Right ventricle myocardium inferior (tissue), 1 donor: ENCODE measurements at regions of chr1 and their contacts with region 1.

Region 1: DNA sequence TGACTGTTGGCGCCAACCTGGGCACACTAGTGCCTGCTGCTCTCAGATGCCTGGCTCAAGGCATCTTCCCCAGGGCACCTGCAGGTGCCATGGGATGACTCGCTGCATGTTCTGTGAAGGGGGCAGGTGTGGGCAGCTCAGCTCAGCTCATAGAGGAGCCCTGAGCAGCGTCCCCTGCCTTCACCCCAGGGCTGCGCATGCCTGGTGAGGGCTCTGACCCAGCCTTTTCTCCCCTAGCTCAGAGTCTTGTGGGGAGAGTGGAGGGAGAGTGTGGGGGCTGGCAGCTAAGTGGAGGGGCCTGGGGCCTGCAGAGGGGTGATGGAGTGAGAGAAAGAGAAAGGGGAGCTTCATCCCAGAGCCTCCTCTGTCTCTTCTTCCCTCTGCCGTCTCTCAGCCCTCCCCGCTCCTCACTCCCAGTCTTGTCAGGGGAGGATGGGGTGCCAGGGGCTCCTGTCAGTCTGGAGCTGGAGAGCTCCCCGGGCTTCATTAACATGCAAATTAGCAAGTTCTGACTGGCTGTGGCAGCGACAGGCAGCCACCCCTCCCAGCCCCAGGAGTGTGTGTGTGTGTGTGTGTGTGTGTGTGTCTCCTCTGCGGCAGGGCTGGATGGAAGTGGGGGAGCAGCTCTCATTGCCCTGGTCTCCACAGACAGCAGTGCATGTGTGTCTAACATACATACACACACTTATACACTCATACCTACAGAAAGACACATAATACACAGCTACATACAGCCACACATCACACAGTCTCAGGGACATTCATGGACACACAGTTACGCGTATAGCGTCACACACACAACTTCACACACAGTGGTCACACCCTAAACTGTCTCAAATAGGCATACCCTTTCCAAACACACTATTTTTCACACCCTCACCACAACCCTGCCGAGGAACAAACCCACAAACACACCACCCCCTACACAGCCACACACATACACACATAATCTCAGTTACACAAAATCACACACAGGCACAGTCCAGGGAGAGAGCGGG is 34.0 kb downstream of the FOXO6 start:
- DNase-seq: peak; percentile 50
- ATAC-seq: peak; percentile 19

Region 2: GRCh38 chr1:41313661-41314131 is 81.6 kb before region 1 on chr1:
- intact Hi-C with region 1: no loop called
- DNase-seq: no peak
- ATAC-seq: no peak

Region 3: DNA sequence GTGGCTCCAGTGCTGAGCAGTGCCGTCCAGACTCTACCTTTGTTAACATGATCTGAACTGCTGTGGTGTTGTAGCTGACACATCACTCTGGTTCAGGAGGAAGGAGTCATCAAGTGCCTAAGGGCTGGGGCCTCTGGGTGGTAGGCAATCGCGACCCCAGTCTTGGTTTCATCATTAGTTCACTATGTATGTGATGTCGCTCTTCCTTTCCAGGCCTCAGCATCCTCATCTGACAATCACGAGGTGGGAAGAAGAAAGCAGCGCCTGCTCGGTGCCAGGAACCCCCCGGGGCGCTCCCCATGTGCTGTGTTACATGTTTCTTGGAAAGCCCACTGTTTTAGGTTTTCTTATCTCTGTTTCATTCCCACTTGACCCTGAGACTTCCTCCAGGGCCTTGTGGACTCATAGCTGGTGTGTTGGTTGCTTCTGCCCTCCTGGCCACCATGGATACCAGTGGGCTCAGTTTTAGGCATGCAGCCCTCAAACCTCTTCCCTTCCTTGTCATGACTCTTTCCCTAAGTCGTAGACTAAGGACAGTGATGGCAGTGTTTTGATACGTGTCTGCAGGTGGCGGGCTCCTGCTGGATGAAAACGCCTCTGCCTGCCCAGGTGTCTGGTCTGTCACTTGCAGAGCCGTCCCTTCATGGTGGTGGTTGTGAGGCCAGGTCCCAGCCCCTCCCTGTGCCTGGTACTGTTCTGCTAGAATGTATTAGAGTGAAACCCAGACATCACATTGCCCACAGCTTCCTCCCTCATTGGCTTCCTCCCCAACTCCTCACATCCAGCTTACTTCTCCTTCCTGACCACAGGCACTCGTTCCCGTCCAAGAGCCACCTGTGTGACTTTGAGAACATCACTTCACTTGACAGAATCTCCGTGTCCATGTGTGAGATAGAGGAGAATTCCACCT is 51.2 kb before region 1 on chr1:
- intact Hi-C with region 1: no loop called
- DNase-seq: no peak
- ATAC-seq: no peak

Region 4: GRCh38 chr1:41360993-41361753 is 34.1 kb before region 1 on chr1 and contains the start of gene FOXO6:
- intact Hi-C with region 1: loop called (anchors 2 kb)
- DNase-seq: peak; percentile 100
- ATAC-seq: peak; percentile 94
- total RNA-seq, gene FOXO6: 4.5 TPM

Region 5: DNA sequence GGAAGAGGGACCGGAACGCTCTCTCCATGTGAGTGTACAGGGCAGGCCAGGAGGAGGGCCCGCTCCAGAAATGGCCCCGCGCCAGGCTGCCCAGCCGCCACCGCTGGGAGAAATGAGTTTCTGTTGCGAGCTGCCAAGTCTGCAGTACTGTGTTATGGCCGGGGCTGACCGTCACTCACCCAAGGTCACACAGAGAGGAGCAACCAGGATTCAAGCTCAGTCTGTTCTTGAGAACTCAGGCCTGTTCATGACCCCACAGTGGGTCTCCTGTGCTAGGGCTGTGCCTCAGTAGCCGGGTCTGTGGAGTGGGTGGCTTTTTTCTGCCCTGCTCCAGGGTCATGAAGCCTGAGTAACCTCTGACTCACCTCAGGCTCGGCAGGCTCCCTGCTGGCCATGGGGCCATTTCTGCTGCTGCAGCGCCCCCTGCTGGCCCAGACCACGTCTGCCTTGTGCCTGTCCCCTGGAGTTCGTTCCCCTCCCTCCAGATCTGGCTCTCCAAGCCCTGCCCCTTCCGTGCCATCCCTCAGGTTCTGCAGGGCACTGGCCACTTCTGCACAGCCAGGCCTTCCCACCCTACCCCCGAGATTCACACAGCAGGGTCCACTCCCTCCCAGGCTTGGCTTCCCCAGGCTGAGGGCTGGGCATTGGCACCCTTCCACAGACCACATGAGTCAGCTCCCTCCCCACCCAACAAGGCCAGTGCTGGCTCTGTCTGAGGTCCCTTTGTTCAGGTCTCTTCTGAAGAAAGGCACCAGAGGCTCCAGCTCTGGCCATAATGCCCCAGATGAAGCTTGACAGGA is 37.4 kb after region 1 on chr1:
- intact Hi-C with region 1: no loop called
- DNase-seq: peak; percentile 94
- ATAC-seq: peak; percentile 90